GM13977 (cell line): ENCODE measurements at regions of chr14 and their contacts with region 1.

Region 1: DNA sequence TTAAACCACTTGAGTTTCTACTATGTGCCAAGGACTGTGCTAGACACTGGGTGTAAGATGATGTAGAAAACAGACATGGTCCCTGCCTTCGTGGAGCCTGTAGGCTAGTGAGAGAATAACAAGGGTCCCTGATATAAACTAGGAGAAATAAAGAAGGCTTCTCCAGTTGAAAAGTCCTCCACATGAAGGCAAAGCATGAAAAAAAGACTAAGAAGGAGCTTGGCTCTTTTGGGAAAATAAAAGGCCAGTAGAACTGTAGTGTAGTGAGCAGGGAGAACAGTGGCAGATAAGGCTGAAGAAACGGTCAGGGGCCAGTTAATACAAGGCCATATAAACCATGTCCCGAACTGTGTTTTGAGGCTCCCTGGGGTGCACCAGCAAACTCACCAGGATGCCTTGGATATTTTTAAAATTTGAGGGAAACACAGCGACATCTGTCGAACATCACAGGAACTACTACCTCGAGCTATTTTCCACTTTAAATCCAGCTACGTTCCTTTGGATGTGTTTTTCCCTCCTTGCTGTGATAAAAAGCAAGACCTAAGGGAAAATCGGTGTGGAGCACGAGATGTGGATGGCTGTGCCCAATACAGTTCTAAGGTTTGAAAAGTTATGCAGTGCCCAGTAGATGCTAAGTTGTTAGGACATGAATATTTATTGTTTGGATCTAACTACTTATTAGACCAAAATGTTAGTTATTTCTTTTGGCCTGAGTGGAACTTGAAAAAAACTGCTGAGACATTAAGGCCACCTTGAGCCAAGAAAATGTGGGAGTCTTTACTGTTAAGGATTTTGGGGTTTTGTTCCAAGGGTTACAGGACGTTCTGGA is 8.5 kb upstream of the CFL2 start:
- DNase-seq: peak; percentile 71
- CTCF ChIP-seq: peak; percentile 71

Region 2: DNA sequence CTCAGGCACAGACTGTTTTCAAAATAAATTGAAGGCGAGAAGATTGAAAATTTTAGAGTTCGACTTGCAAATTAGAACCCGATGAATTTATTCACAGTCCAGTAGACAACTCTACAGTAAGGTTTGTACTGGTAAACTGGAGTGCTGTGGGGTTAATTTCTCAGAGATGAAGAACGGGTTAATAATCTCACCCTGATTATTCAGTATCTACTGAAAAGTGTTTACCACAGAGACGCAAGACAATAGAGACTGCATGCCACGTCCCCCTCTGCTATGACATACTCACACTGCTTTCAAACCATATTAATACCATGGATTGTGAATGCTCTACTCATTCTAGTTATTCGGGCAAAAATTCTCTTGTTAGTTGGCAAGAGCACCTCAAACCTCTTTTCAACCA is 44.6 kb before region 1 on chr14:
- in situ Hi-C with region 1: loop called (anchors 10 kb)
- DNase-seq: no peak
- CTCF ChIP-seq: no peak

Region 3: DNA sequence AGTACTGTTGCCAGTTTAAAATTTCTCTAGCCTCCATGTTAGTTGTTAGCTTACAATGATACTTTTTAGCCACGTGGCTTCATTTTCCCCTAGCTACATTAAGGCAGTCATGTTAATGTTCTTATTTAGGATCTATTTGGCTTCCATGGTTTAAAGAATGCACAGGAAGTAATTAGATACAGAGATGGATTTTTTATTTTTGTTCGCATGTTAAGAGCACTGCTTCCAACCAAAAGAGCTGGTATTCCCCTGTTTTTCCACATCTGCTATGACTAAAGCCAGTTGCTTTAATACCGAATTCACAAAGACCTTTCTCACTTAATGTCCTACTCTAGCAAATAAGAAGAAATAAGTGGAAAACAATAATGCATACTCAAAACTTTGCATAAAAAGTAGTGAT is 444.6 kb after region 1 on chr14:
- in situ Hi-C with region 1: no loop called
- DNase-seq: no peak
- CTCF ChIP-seq: no peak